ENCODE measurements at regions of chr7 and their contacts with region 1.

Region 1: GRCh38 chr7:19121977-19122588 is 4.6 kb upstream of the TWIST1 start:
- DNase-seq: no peak
- H3K4me3 Mint-ChIP-seq: no peak overlapping the region
- H3K27ac Mint-ChIP-seq: no peak overlapping the region
- H3K4me1 Mint-ChIP-seq: no peaks in the 10 kb centered on the region
- H3K27me3 Mint-ChIP-seq: peaks cover 57% of the 10 kb centered on the region
- CTCF ChIP-seq: peak; percentile 60

Region 2: DNA sequence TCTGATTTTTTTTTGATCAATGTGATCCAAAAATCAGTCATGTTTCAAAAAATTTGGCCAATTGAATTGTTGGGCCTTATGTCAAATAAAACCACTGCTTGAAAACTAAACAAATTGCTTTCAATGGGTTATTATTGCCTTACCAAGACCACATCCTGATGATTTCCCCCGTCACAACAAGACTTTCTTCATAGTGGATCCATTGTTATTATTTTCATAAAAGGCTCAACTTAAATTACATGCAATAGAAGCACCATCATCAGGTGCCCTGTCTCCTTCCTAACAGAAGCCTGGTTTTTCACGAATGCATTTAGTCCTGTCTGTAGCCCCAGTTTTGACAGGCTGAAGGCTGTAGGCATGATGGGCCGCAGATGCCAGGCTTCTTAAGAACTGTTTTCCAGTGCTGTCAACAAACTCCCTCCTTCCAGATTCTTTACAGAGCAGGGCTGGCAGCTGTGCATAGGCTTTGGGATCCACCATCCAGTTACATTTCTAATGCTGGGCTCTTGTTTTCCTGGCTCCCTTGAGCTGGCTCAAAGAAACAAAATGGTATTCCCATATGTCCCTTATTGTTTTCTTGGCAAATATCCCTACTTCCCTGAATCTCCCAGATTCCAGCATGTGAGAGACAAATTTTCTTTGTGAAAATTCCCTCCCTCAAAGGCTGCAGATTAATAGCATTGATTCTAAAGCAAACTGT is 306.7 kb before region 1 on chr7:
- CTCF ChIA-PET with region 1: no interaction called
- intact Hi-C with region 1: no loop called
- DNase-seq: no peak
- H3K4me3 Mint-ChIP-seq: no peak overlapping the region
- H3K27ac Mint-ChIP-seq: no peak overlapping the region
- H3K4me1 Mint-ChIP-seq: no peaks in the 10 kb centered on the region
- H3K27me3 Mint-ChIP-seq: no peaks in the 10 kb centered on the region
- CTCF ChIP-seq: no peak

Region 3: DNA sequence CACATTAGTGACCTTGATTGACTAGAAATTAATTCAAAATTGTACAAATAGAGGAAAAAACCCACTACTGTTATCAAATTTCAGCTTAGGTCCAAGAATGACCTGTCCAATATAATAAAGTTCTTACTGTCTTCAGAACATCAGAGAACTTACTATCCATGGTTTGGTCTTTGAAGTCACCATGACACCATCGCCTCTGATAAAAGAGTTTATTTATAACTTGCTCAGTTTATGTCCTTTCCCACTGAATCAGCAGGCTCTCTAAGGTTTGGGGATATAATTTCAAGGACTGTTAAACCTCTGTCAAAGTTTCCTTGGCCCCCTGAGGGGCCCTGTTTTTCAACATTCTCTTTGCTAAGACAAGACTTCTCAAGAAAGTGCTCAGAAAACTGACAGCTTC is 214.8 kb after region 1 on chr7:
- CTCF ChIA-PET with region 1: no interaction called
- intact Hi-C with region 1: no loop called
- DNase-seq: no peak
- H3K4me3 Mint-ChIP-seq: no peak overlapping the region
- H3K27ac Mint-ChIP-seq: no peak overlapping the region
- H3K4me1 Mint-ChIP-seq: no peaks in the 10 kb centered on the region
- H3K27me3 Mint-ChIP-seq: peaks cover 20% of the 10 kb centered on the region
- CTCF ChIP-seq: no peak

Region 4: GRCh38 chr7:19442016-19442785 is 320.1 kb after region 1 on chr7:
- CTCF ChIA-PET with region 1: interaction called, 4 read pairs
- intact Hi-C with region 1: loop called (anchors 1 kb)
- DNase-seq: peak; percentile 42
- H3K4me3 Mint-ChIP-seq: no peak overlapping the region
- H3K27ac Mint-ChIP-seq: no peak overlapping the region
- H3K4me1 Mint-ChIP-seq: no peaks in the 10 kb centered on the region
- H3K27me3 Mint-ChIP-seq: no peaks in the 10 kb centered on the region
- CTCF ChIP-seq: peak; percentile 51

Region 5: DNA sequence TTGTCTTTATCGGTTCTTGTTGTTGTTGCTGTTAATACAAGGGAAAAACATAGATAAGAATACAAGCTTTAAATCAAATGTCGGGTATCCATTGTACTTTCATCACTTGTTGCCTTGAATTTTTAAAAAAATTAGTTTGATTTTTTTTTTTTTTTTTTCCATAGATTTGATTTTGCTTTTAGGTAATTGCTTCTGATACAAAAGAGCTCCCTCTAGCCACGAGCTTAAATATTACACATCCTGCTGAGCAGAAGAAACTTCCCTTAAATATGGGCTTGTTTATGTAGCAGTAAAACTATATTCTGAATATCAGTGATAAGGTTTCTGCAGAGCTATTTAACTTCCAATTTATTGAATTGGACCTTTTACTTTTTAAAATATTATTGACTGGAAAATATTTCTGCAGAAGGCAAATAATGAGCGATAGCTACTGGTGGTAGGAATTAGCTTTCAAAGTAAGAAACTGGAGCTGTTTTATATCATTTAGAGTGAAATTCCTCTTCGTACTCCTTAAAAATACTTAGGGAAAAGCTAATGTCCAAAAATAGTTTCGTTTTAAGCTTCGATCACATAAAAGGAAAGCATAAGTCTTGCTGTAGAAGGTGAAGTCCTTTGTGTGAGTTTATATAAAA is 369.9 kb after region 1 on chr7:
- CTCF ChIA-PET with region 1: interaction called, 17 read pairs
- intact Hi-C with region 1: loop called (anchors 5 kb)
- DNase-seq: peak; percentile 39
- H3K4me3 Mint-ChIP-seq: no peak overlapping the region
- H3K27ac Mint-ChIP-seq: no peak overlapping the region
- H3K4me1 Mint-ChIP-seq: no peaks in the 10 kb centered on the region
- H3K27me3 Mint-ChIP-seq: no peaks in the 10 kb centered on the region
- CTCF ChIP-seq: peak; percentile 61

Region 6: GRCh38 chr7:19552576-19552975 is 430.5 kb after region 1 on chr7:
- CTCF ChIA-PET with region 1: interaction called, 5 read pairs
- intact Hi-C with region 1: loop called (anchors 2 kb)
- DNase-seq: no peak
- H3K4me3 Mint-ChIP-seq: no peak overlapping the region
- H3K27ac Mint-ChIP-seq: no peak overlapping the region
- H3K4me1 Mint-ChIP-seq: no peaks in the 10 kb centered on the region
- H3K27me3 Mint-ChIP-seq: peaks cover 17% of the 10 kb centered on the region
- CTCF ChIP-seq: no peak

Region 7: GRCh38 chr7:19621740-19622139 is 499.7 kb after region 1 on chr7:
- CTCF ChIA-PET with region 1: no interaction called
- intact Hi-C with region 1: loop called (anchors 2 kb)
- DNase-seq: no peak
- H3K4me3 Mint-ChIP-seq: no peak overlapping the region
- H3K27ac Mint-ChIP-seq: no peak overlapping the region
- H3K4me1 Mint-ChIP-seq: no peaks in the 10 kb centered on the region
- H3K27me3 Mint-ChIP-seq: peaks cover 58% of the 10 kb centered on the region
- CTCF ChIP-seq: peak; percentile 12